Activated CD4-positive, alpha-beta T cell treated with anti-CD3 and anti-CD28 coated beads, Interleukin-2, amount 10 ng/mL, durations not matched to agents 24 days and 14 days (primary cell): ENCODE measurements at regions of chr2 and their contacts with region 1.

Region 1: DNA sequence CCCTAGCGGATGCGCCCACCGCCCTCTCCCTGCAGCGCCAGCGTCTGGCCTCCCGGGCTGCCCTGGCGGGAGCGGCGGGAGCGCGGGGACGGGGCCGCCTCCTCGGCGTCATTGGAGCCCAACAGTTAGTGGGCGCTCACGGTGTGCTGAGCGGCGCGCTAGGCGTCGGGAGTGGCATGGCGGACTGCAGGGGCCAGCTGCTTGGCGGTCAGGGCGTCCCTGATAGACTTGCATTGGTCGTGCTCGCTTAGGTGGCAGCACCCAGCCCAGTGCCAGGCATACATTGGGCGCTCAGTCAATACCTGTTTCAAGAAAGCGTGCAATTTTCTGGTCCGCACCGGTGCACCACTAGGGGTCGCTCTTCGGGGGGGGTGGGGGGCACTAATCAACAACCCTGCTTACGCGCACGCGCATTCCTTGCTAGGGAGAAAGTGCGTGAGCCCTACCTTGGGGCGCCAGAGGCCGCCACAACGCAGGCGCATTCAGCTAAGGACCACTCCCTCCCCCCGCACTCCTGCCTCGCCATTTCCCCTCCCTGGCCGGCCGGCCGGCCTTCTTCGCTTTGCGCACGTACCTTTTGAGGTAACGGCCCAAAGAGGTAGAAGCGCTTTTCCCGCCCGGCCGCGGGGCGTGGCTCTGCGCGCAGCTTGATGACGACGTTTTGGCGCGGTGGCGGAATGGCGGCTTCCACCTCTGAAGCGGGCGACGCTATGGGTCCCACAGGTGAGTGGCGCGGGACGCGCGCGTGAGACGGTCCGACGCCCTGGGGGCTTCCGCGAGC is 411 bp upstream of the MZT2A start:
- DNase-seq: peak; percentile 98
- H3K4me3 Mint-ChIP-seq: peak overlapping the region; percentile 98
- H3K27ac Mint-ChIP-seq: peak overlapping the region; percentile 98
- H3K4me1 Mint-ChIP-seq: peaks cover 37% of the 10 kb centered on the region
- H3K27me3 Mint-ChIP-seq: no peaks in the 10 kb centered on the region

Region 2: DNA sequence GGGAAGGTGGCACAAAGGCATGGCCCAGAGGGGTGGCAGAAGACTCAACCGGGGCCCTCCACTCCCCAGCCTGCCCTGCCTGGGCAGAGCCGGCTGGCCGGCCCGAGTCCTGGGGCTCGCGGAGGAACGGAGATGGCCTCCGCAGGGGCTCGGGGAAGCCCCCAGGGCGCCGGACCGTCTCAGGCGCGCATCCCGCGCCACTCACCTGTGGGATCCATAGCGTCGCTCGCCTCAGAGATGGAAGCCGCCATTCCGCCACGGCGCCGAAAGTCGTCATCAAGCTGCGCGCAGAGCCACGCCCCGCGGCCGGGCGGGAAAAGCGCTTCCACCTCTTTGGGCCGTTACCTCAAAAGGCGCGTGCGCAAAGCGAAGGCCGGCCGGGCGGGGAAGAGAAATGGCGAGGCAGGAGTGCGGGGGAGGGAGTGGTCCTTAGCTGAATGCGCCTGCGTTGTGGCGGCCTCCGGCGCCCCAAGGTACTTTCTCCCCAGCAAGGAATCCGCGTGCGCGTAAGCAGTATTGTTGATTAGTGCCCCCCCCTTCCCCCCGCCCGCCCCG is 1311.2 kb before region 1 on chr2 and contains the start of gene SMPD4:
- intact Hi-C with region 1: loop called (anchors 5 kb)
- DNase-seq: peak; percentile 99
- H3K4me3 Mint-ChIP-seq: peak within 1 kb of the TSS; percentile 93
- H3K27ac Mint-ChIP-seq: peak within 1 kb of the TSS; percentile 96
- H3K4me1 Mint-ChIP-seq: peaks cover 7% of the 10 kb centered on the region
- H3K27me3 Mint-ChIP-seq: no peaks in the 10 kb centered on the region
- total RNA-seq, gene SMPD4: 86.0 and 91.1 TPM in 2 replicates

Region 3: DNA sequence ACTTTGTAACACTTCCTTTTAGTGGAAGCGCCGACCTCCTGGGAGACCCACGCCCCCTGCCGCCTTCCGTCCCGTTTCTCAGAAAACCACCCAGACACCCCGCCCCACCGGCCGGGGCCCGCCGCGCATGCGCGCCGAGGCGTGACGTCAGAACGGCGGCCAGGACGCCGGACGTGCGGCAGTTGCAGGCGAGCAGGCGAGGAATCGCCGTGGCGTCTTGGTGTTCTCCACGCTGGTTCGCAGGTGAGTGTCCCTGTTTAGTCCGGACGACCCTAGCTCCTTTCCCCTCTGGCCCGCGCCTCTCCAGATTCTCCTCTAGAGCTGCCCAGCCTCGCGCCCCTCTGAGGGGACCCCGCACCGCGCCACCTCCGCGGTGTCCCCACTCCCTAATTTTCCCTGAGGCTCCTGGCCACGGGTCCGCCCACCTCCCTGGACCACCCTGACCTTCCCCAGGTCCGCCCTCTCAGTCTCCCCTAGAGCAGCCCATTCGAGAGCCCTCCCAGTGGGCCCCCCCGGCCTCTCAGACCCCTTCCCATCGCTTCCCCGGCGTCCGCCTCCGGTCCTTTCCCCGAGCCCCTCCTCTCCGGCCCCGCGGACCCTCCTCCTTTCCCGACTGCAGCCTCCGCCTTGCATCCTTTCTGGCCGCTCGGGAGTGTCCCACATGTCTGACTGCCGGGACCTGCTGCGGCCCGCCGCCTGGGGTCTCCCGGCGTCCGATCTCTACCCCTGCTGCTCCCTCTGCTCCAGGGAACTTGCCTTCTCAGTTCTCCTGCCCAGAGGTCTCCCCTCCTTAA is 387.3 kb before region 1 on chr2 and contains the start of gene PLEKHB2:
- intact Hi-C with region 1: loop called (anchors 2 kb)
- DNase-seq: peak; percentile 99
- H3K4me3 Mint-ChIP-seq: peak within 1 kb of the TSS; percentile 92
- H3K27ac Mint-ChIP-seq: peak within 1 kb of the TSS; percentile 95
- H3K4me1 Mint-ChIP-seq: peaks cover 44% of the 10 kb centered on the region
- H3K27me3 Mint-ChIP-seq: no peaks in the 10 kb centered on the region
- total RNA-seq, gene PLEKHB2: 62.4 and 66.7 TPM in 2 replicates

Region 4: DNA sequence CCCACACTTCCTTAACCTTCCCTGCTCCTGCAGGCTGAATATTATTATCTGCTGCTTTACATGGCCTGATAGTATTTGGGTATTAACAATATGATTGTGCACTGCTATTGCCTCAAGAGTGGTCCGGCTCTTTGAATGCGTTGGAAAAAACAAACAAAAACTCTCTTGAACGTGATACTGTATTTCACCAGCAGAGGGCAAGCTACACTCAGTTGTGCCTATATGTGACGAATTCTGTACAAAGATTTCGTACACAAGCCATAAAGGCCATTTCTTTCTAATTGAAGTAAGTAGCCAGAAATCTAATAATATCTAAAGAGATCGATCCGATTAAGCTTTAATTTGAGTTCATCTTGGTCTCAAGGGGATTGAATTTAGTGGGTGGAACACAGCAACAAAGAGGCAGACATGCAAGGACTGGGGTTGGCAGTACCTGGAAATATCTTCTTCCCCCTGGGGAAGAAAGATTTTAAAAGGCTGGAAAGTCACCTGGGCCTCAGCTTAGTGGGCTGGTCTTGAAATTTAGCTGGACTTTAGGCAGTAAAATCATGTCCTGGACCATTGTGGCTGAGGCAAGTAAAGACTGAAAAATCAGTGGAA is 79.4 kb before region 1 on chr2:
- intact Hi-C with region 1: loop called (anchors 1 kb)
- DNase-seq: peak; percentile 82
- H3K4me3 Mint-ChIP-seq: no peak overlapping the region
- H3K27ac Mint-ChIP-seq: no peak overlapping the region
- H3K4me1 Mint-ChIP-seq: peaks cover 9% of the 10 kb centered on the region
- H3K27me3 Mint-ChIP-seq: peaks cover 44% of the 10 kb centered on the region

Region 5: GRCh38 chr2:131572175-131572574 is 79.6 kb after region 1 on chr2:
- intact Hi-C with region 1: no loop called
- DNase-seq: no peak
- H3K4me3 Mint-ChIP-seq: no peak overlapping the region
- H3K27ac Mint-ChIP-seq: no peak overlapping the region
- H3K4me1 Mint-ChIP-seq: no peaks in the 10 kb centered on the region
- H3K27me3 Mint-ChIP-seq: peaks cover 30% of the 10 kb centered on the region

Region 6: GRCh38 chr2:131682122-131682944 is 189.7 kb after region 1 on chr2:
- intact Hi-C with region 1: loop called (anchors 2 kb)
- DNase-seq: peak; percentile 93
- H3K4me3 Mint-ChIP-seq: peak overlapping the region; percentile 89
- H3K27ac Mint-ChIP-seq: peak overlapping the region; percentile 78
- H3K4me1 Mint-ChIP-seq: peaks cover 39% of the 10 kb centered on the region
- H3K27me3 Mint-ChIP-seq: peaks cover 12% of the 10 kb centered on the region

Region 7: GRCh38 chr2:131754929-131755720 is 262.5 kb after region 1 on chr2:
- intact Hi-C with region 1: no loop called
- DNase-seq: no peak
- H3K4me3 Mint-ChIP-seq: no peak overlapping the region
- H3K27ac Mint-ChIP-seq: no peak overlapping the region
- H3K4me1 Mint-ChIP-seq: no peaks in the 10 kb centered on the region
- H3K27me3 Mint-ChIP-seq: peaks cover 2% of the 10 kb centered on the region